OCI-LY7 (cell line): ENCODE measurements at regions of chr11 and their contacts with region 1.

Region 1: GRCh38 chr11:128026596-128026995 is 560.8 kb downstream of the ETS1 start:
- DNase-seq: no peak
- H3K4me3 ChIP-seq: no peak overlapping the region
- H3K27ac ChIP-seq: no peak overlapping the region
- H3K4me1 ChIP-seq: no peaks in the 10 kb centered on the region
- CTCF ChIP-seq: no peak

Region 2: GRCh38 chr11:128157423-128158298 is 131.1 kb after region 1 on chr11:
- CTCF ChIA-PET with region 1: no interaction called
- POLR2A ChIA-PET with region 1: no interaction called
- intact Hi-C with region 1: loop called (anchors 1 kb)
- DNase-seq: peak; percentile 80
- H3K4me3 ChIP-seq: no peak overlapping the region
- H3K27ac ChIP-seq: no peak overlapping the region
- H3K4me1 ChIP-seq: no peaks in the 10 kb centered on the region
- CTCF ChIP-seq: peak; percentile 100

Region 3: GRCh38 chr11:128302425-128303186 is 276.0 kb after region 1 on chr11:
- CTCF ChIA-PET with region 1: no interaction called
- POLR2A ChIA-PET with region 1: no interaction called
- intact Hi-C with region 1: no loop called
- DNase-seq: peak; percentile 47
- H3K4me3 ChIP-seq: no peak overlapping the region
- H3K27ac ChIP-seq: no peak overlapping the region
- H3K4me1 ChIP-seq: peaks cover 29% of the 10 kb centered on the region
- CTCF ChIP-seq: no peak